HepG2 (cell line): ENCODE measurements at regions of chr18 and their contacts with region 1.

Region 1: DNA sequence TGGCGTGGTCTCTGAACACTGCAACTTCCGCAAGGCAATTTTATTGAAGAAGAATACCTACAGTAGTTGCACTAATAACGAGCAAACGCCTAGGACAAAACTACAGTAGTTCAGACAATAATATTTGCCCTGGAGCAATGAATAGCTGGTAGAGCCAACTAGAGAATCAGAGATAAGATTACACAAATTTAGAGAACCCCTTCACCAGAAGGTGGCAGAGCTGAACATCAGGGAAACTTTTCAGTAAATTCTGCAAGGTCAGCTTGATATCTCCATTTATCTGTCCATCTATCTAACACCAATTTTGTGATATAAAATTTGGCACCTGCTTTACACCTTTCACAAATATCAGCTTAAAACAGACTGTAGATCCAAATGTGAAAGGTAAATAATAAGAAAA is 43.8 kb downstream of the CDH19 start:
- DNase-seq: peak; percentile 34
- ATAC-seq: peak; percentile 71
- H3K4me3 ChIP-seq: no peak overlapping the region
- H3K27ac ChIP-seq: no peak overlapping the region
- H3K4me1 ChIP-seq: no peaks in the 10 kb centered on the region
- H3K27me3 ChIP-seq: no peaks in the 10 kb centered on the region
- CTCF ChIP-seq: peak; percentile 51
- EP300 ChIP-seq: no peak
- POLR2A ChIP-seq: no peak
- RAD21 ChIP-seq: no peak

Region 2: GRCh38 chr18:66226782-66227181 is 333.3 kb before region 1 on chr18:
- CTCF ChIA-PET with region 1: no interaction called
- POLR2A ChIA-PET with region 1: no interaction called
- in situ Hi-C with region 1: no loop called
- intact Hi-C with region 1: no loop called
- DNase-seq: no peak
- ATAC-seq: no peak
- H3K4me3 ChIP-seq: no peak overlapping the region
- H3K27ac ChIP-seq: no peak overlapping the region
- H3K4me1 ChIP-seq: no peaks in the 10 kb centered on the region
- H3K27me3 ChIP-seq: no peaks in the 10 kb centered on the region
- CTCF ChIP-seq: no peak
- EP300 ChIP-seq: no peak
- POLR2A ChIP-seq: no peak
- RAD21 ChIP-seq: no peak

Region 3: DNA sequence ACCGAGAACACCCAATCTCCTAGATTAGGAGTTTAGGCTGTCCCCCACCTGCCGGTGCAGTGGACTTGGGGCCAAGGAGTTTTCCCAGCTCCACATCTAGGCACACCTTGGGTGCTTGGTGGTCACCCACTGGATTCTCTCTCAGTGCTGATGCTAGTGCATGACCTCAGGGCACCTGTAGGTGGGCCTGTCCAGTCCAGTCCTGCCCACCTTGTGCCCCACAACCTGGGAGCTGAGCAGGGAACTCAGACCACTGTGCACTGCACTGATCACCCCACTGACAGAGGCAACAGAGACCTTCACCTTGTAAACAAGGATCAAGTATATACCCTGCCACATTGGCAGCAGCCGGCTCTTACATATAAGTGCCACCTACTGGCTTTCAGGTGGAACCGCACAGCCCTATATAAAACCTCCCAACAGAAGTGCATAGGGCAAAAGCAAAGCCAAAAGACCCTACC is 56.5 kb after region 1 on chr18:
- CTCF ChIA-PET with region 1: interaction called, 8 read pairs
- POLR2A ChIA-PET with region 1: no interaction called
- in situ Hi-C with region 1: no loop called
- intact Hi-C with region 1: loop called (anchors 1 kb)
- DNase-seq: peak; percentile 35
- ATAC-seq: peak; percentile 99
- H3K4me3 ChIP-seq: no peak overlapping the region
- H3K27ac ChIP-seq: no peak overlapping the region
- H3K4me1 ChIP-seq: no peaks in the 10 kb centered on the region
- H3K27me3 ChIP-seq: no peaks in the 10 kb centered on the region
- CTCF ChIP-seq: peak; percentile 59
- EP300 ChIP-seq: no peak
- POLR2A ChIP-seq: no peak
- RAD21 ChIP-seq: no peak

Region 4: DNA sequence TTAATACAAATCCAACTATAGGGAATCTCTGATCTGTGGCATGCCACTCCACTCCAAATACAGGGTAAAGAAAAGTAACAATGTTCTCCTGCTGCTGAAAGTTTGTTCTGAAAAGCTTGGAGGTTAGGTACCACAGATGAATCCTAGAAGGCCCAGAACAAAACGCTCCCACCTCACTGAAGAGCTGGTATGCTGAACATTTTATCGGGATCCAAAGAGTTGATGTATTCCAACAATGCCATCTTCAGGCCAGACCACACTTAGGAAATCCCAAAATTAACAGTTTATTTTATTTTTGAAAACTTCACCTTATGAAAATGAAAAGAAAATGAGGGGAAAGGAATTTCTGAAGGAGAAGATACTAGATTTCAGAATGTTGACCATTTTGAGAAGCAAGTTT is 188.9 kb after region 1 on chr18:
- CTCF ChIA-PET with region 1: interaction called, 3 read pairs
- POLR2A ChIA-PET with region 1: no interaction called
- in situ Hi-C with region 1: no loop called
- intact Hi-C with region 1: loop called (anchors 1 kb)
- DNase-seq: peak; percentile 1
- ATAC-seq: peak; percentile 77
- H3K4me3 ChIP-seq: no peak overlapping the region
- H3K27ac ChIP-seq: no peak overlapping the region
- H3K4me1 ChIP-seq: no peaks in the 10 kb centered on the region
- H3K27me3 ChIP-seq: no peaks in the 10 kb centered on the region
- CTCF ChIP-seq: peak; percentile 54
- EP300 ChIP-seq: no peak
- POLR2A ChIP-seq: no peak
- RAD21 ChIP-seq: no peak

Region 5: DNA sequence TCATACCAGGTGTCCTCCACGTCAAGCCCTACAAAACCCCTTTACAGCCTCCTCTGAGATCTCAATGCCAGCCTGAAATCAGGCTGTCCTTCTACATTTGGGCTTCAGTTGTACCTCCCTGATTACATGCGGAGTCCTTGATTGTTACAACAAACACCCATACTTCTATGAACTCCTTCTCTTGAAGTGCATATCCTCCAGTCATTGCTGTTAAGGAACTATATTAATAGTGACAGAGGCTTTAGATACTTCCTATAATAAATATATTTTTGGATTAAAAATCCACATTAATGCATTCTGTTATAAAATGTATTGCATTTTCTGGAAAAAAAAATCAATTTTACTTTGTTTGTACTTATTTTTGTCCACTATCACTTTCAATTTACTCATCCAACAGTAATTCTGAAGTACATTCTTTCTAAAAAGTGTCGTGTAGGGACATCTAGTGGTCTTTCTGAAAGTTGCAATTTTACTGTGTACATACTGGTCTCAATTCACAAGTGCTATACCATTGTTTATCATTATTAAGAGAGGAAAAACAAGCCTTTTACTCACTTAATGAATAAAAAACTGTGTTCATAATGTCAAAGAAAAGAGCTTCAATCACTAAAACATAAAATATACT is 640.0 kb after region 1 on chr18:
- CTCF ChIA-PET with region 1: no interaction called
- POLR2A ChIA-PET with region 1: no interaction called
- in situ Hi-C with region 1: loop called (anchors 25 kb)
- intact Hi-C with region 1: loop called (anchors 2 kb)
- DNase-seq: peak; percentile 53
- ATAC-seq: peak; percentile 93
- H3K4me3 ChIP-seq: no peak overlapping the region
- H3K27ac ChIP-seq: no peak overlapping the region
- H3K4me1 ChIP-seq: no peaks in the 10 kb centered on the region
- H3K27me3 ChIP-seq: no peaks in the 10 kb centered on the region; a peak in 1 of 5 replicates
- CTCF ChIP-seq: peak; percentile 66
- EP300 ChIP-seq: no peak
- POLR2A ChIP-seq: no peak
- RAD21 ChIP-seq: 0 out of 2 replicates have a peak, but pooled peaks have one; percentile 16